Activated naive CD8-positive, alpha-beta T cell treated with anti-CD3 and anti-CD28 coated beads, Interleukin-2, amount 10 ng/mL, durations not matched to agents 7 days and 5 days (primary cell): ENCODE measurements at regions of chr14 and their contacts with region 1.

Region 1: GRCh38 chr14:103562429-103563225 is at the starts of genes BAG5 and COA8:
- DNase-seq: peak; percentile 94
- ATAC-seq: peak; percentile 78
- H3K4me3 Mint-ChIP-seq: peak within 1 kb of the TSS; percentile 94
- H3K27ac Mint-ChIP-seq: peak within 1 kb of the TSS; percentile 86
- H3K4me1 Mint-ChIP-seq: peaks cover 43% of the 10 kb centered on the region
- H3K27me3 Mint-ChIP-seq: no peaks in the 10 kb centered on the region
- total RNA-seq, gene BAG5: 31.7 to 32.3 TPM
- total RNA-seq, gene COA8: 26.7 to 29.5 TPM

Region 2: DNA sequence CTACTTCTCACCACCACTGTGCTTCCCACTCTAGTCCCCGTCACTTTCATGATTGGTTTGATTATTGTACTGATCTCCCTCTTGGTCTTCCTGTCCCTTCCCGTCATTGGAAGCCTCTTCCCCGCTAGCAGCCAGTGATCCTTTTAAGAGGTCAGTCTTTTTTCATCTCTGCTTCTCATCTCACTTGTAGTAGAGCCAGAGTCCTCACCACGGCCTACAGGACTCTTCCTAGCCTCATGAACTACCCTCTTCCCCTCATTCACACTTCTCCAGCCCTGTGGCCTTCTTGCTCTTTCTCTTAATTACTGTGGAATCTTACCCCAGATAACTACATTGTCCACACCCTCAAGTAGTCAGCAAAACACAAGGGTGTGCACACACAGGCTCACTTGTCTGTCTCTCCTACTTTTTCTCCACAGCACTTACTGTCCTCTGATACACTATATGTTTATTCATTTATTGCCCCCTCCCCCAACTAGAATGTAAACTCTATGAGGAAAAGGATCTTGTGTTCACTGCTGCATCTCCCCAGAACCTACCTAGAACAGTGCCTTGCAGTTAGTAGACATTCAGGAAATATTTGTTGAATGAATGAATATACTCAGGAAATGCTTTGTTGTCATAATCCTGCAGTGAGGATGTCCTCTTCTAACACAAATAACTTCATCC is 106.3 kb before region 1 on chr14:
- POLR2A ChIA-PET with region 1: no interaction called
- DNase-seq: no peak
- ATAC-seq: no peak
- H3K4me3 Mint-ChIP-seq: no peak overlapping the region
- H3K27ac Mint-ChIP-seq: peak overlapping the region; percentile 1
- H3K4me1 Mint-ChIP-seq: peaks cover 12% of the 10 kb centered on the region
- H3K27me3 Mint-ChIP-seq: no peaks in the 10 kb centered on the region

Region 3: GRCh38 chr14:103520657-103521437 is 41.8 kb before region 1 on chr14:
- POLR2A ChIA-PET with region 1: interaction called, 10 read pairs
- DNase-seq: peak; percentile 77
- ATAC-seq: peak; percentile 68
- H3K4me3 Mint-ChIP-seq: peak overlapping the region; percentile 58
- H3K27ac Mint-ChIP-seq: no peak overlapping the region
- H3K4me1 Mint-ChIP-seq: peaks cover 8% of the 10 kb centered on the region
- H3K27me3 Mint-ChIP-seq: peaks cover 18% of the 10 kb centered on the region

Region 4: GRCh38 chr14:103534576-103535061 is 28.0 kb before region 1 on chr14:
- POLR2A ChIA-PET with region 1: no interaction called
- DNase-seq: no peak
- ATAC-seq: no peak
- H3K4me3 Mint-ChIP-seq: no peak overlapping the region
- H3K27ac Mint-ChIP-seq: no peak overlapping the region
- H3K4me1 Mint-ChIP-seq: peaks cover 10% of the 10 kb centered on the region
- H3K27me3 Mint-ChIP-seq: no peaks in the 10 kb centered on the region

Region 5: DNA sequence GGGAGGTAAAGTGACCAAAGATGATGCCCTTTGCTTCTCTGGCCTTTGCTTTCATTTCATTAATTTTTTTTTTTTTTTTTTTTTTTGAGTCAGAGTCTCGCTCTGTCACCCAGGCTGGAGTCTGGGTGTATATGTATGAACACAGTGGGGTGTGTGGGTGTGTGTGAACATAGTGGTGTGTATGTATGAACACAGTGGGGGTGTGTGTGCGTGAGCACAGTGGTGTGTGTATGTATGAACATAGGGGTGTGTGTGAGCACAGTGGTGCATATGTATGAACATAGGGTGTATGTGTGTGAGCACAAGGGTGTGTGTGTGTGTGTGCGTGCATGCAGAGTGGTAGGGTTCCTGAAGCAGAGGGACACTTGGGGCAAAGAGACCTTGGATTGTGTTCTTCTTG is 76.0 kb after region 1 on chr14:
- POLR2A ChIA-PET with region 1: no interaction called
- DNase-seq: no peak
- ATAC-seq: no peak
- H3K4me3 Mint-ChIP-seq: no peak overlapping the region
- H3K27ac Mint-ChIP-seq: no peak overlapping the region
- H3K4me1 Mint-ChIP-seq: peaks cover 32% of the 10 kb centered on the region
- H3K27me3 Mint-ChIP-seq: no peaks in the 10 kb centered on the region